GM12878 (cell line): ENCODE measurements at regions of chr21 and their contacts with region 1.

Region 1: GRCh38 chr21:16002874-16003466 is 273.2 kb downstream of the USP25 start:
- DNase-seq: no peak
- ATAC-seq: no peak
- H3K4me3 ChIP-seq: no peak overlapping the region
- H3K27ac ChIP-seq: no peak overlapping the region
- H3K4me1 ChIP-seq: no peaks in the 10 kb centered on the region
- H3K27me3 ChIP-seq: no peaks in the 10 kb centered on the region
- CTCF ChIP-seq: peak in 1 of 3 experiments; percentile 4; a peak in 1 of 6 replicates
- EP300 ChIP-seq: no peak
- POLR2A ChIP-seq: no peak
- RAD21 ChIP-seq: no peak

Region 2: GRCh38 chr21:16069178-16070112 is 66.5 kb after region 1 on chr21:
- CTCF ChIA-PET with region 1: no interaction called
- POLR2A ChIA-PET with region 1: no interaction called
- RAD21 ChIA-PET with region 1: no interaction called
- SMC1A ChIA-PET with region 1: no interaction called
- in situ Hi-C with region 1: loop called (anchors 10 kb)
- intact Hi-C with region 1: no loop called
- DNase-seq: no peak
- ATAC-seq: no peak
- H3K4me3 ChIP-seq: no peak overlapping the region
- H3K27ac ChIP-seq: no peak overlapping the region
- H3K4me1 ChIP-seq: no peaks in the 10 kb centered on the region
- H3K27me3 ChIP-seq: no peaks in the 10 kb centered on the region
- CTCF ChIP-seq: no peak
- EP300 ChIP-seq: no peak
- POLR2A ChIP-seq: no peak
- RAD21 ChIP-seq: no peak

Region 3: DNA sequence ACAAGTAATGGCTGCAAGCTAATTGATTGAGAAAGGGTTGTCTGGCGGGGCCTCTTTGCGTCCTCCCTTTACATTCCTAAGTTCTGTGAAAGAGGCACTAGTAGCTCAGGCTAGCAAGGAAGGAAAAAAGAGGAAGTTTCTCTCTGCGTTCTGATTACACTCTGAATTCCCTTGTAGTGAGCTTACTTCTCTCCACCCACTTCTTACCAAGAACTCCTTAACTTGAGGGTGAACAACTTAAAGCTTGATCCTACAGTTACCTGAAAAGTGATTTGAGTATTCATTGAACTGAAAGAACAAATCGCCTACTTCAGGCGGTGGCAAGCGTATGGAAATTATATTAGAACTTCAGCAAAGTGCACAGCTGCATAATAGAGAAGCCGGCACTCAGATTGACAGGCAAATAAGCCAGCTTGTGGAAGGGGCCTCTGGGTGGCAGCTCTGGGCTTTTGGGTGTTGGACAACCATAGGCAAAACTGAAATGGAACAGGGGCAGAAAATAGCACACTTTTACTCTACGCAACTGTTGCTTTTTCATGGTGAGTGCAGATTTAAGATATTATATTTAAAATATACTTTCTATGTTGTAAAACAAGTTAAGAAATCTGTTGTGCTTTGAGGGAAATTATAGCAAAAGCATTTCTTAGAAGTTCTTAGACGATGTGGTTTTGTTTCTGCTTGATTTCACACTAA is 191.3 kb after region 1 on chr21:
- CTCF ChIA-PET with region 1: no interaction called
- POLR2A ChIA-PET with region 1: no interaction called
- RAD21 ChIA-PET with region 1: no interaction called
- SMC1A ChIA-PET with region 1: no interaction called
- in situ Hi-C with region 1: no loop called
- intact Hi-C with region 1: no loop called
- DNase-seq: no peak
- ATAC-seq: peak; percentile 76
- H3K4me3 ChIP-seq: peak overlapping the region; percentile 41; the same call in 1 of the 2 replicates
- H3K27ac ChIP-seq: peak overlapping the region; percentile 28
- H3K4me1 ChIP-seq: no peaks in the 10 kb centered on the region
- H3K27me3 ChIP-seq: no peaks in the 10 kb centered on the region
- CTCF ChIP-seq: peak in 2 of 3 experiments; percentile 12 to 30; a peak in 2 of 6 replicates
- EP300 ChIP-seq: no peak
- POLR2A ChIP-seq: no peak
- RAD21 ChIP-seq: peak; percentile 61